ENCODE measurements at regions of chr6 and their contacts with region 1.

Region 1: DNA sequence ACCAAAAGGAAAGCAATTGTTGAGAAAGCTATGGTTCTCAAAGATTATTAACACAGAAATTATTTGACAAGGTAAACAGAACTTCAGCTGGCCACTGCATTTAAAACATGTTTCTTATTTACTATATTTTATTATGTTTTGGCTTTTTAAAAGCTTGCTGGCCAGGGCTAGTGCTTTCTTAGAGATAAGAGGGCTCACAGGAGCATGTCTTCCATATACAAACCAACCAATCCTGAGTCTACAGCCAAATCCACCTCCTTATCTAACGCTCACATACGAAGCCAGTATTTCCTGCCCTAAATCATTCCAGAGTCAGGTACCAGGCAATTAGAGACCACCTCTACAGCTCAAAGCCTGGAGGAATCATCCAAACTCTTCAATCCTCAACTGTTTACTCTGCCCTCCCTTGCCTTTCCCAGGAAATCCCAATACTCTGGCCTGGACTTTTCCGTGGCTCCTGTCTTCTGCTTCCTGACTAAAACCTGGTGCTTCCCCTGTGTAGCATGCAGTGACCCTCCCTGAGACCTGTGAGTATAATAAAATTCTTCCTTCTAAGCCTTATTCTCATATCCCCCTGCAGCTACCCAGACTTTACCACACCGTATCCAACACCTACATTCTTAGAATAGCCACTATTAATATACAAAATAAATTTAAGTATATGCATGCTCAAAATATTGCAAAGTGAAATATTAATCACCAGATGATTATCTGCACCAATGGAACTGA is 33.2 kb downstream of the RANBP9 start:
- DNase-seq: peak; percentile 30
- ATAC-seq: peak; percentile 87
- H3K4me3 ChIP-seq: peak overlapping the region in 2 of 3 experiments; percentile 4 to 38; a peak in 1 of 6 replicates
- H3K27ac ChIP-seq: peak overlapping the region; percentile 83
- H3K4me1 ChIP-seq: peaks cover 33% of the 10 kb centered on the region
- H3K27me3 ChIP-seq: no peaks in the 10 kb centered on the region
- CTCF ChIP-seq: no peak
- EP300 ChIP-seq: no peak; a peak in 1 of 4 replicates
- POLR2A ChIP-seq: no peak
- RAD21 ChIP-seq: no peak

Region 2: GRCh38 chr6:13641315-13641714 is 37.1 kb before region 1 on chr6:
- CTCF ChIA-PET with region 1: no interaction called
- POLR2A ChIA-PET with region 1: no interaction called
- in situ Hi-C with region 1: no loop called
- intact Hi-C with region 1: loop called (anchors 5 kb)
- DNase-seq: no peak
- ATAC-seq: no peak
- H3K4me3 ChIP-seq: no peak overlapping the region
- H3K27ac ChIP-seq: no peak overlapping the region
- H3K4me1 ChIP-seq: peaks cover 21% of the 10 kb centered on the region
- H3K27me3 ChIP-seq: no peaks in the 10 kb centered on the region
- CTCF ChIP-seq: no peak
- EP300 ChIP-seq: no peak
- POLR2A ChIP-seq: no peak
- RAD21 ChIP-seq: no peak

Region 3: DNA sequence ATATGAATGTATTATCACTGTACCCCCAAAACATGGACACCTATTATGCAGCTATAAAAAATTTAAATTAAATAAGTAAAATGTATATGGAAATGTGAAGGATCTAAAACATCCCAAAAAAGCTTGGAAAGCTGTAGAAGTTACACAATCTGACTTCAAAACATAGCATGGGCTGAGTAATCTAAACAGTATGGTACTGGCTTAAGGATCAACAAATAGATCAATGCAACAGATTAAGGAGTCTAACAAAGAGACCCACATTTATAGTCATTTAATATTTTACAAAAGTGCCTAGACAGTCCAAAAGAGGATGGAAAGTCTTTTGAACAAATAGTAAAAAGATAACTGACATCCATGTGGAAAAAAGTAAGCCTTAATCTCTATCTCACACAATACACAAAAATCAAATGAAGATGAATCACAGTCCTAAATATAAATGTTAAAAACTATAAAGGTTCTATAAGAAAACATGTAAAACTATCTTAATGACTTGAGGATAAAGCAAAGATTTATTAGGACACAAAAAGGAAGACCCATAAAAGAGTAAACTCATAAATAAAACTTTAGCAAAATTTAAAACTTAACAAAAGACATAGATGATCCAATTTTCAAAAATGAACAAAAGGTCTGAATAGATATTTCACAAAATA is 13.6 kb before region 1 on chr6:
- CTCF ChIA-PET with region 1: no interaction called
- POLR2A ChIA-PET with region 1: interaction called, 5 read pairs
- in situ Hi-C with region 1: no loop called
- intact Hi-C with region 1: loop called (anchors 2 kb)
- DNase-seq: peak; percentile 65
- ATAC-seq: peak; percentile 66
- H3K4me3 ChIP-seq: no peak overlapping the region
- H3K27ac ChIP-seq: peak overlapping the region; percentile 12
- H3K4me1 ChIP-seq: peaks cover 85% of the 10 kb centered on the region
- H3K27me3 ChIP-seq: no peaks in the 10 kb centered on the region
- CTCF ChIP-seq: no peak
- EP300 ChIP-seq: peak in 1 of 2 experiments; percentile 84; a peak in 2 of 4 replicates
- POLR2A ChIP-seq: no peak
- RAD21 ChIP-seq: no peak

Region 4: DNA sequence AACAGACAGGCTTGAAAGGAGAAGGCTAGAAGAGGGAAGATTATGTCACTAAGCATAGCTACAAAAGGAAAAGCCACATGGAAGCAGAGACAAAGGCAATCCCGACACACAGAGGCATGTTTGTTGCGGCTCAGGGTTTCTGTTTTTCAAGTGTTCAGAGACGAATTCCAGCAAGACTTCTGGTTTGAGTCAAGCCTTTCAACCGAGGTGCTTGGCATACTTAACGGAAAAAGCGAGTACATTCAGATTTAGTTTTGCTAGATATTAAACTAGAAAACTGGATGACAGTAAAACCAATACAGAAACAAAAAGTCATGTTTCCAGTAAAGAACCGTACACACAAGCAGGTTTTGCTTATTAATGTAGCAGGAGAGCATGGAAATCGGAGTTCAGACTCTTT is 108.7 kb after region 1 on chr6:
- CTCF ChIA-PET with region 1: no interaction called
- POLR2A ChIA-PET with region 1: no interaction called
- in situ Hi-C with region 1: no loop called
- intact Hi-C with region 1: no loop called
- DNase-seq: no peak
- ATAC-seq: no peak
- H3K4me3 ChIP-seq: no peak overlapping the region
- H3K27ac ChIP-seq: no peak overlapping the region
- H3K4me1 ChIP-seq: no peaks in the 10 kb centered on the region
- H3K27me3 ChIP-seq: no peaks in the 10 kb centered on the region
- CTCF ChIP-seq: no peak
- EP300 ChIP-seq: no peak
- POLR2A ChIP-seq: no peak
- RAD21 ChIP-seq: no peak

Measured in HepG2 (cell line).